Activated CD4-positive, alpha-beta T cell treated with anti-CD3 and anti-CD28 coated beads for 36 hours (primary cell): ENCODE measurements at regions of chr14 and their contacts with region 1.

Region 1: GRCh38 chr14:69611201-69612011 is at the start of gene SUSD6:
- DNase-seq: peak; percentile 95
- ATAC-seq: peak; percentile 74
- H3K4me3 Mint-ChIP-seq: peak within 1 kb of the TSS; percentile 87
- H3K27ac Mint-ChIP-seq: peak within 1 kb of the TSS; percentile 99
- H3K4me1 Mint-ChIP-seq: peaks cover 48% of the 10 kb centered on the region
- H3K27me3 Mint-ChIP-seq: no peaks in the 10 kb centered on the region
- total RNA-seq, gene SUSD6: 57.9 to 59.3 TPM

Region 2: DNA sequence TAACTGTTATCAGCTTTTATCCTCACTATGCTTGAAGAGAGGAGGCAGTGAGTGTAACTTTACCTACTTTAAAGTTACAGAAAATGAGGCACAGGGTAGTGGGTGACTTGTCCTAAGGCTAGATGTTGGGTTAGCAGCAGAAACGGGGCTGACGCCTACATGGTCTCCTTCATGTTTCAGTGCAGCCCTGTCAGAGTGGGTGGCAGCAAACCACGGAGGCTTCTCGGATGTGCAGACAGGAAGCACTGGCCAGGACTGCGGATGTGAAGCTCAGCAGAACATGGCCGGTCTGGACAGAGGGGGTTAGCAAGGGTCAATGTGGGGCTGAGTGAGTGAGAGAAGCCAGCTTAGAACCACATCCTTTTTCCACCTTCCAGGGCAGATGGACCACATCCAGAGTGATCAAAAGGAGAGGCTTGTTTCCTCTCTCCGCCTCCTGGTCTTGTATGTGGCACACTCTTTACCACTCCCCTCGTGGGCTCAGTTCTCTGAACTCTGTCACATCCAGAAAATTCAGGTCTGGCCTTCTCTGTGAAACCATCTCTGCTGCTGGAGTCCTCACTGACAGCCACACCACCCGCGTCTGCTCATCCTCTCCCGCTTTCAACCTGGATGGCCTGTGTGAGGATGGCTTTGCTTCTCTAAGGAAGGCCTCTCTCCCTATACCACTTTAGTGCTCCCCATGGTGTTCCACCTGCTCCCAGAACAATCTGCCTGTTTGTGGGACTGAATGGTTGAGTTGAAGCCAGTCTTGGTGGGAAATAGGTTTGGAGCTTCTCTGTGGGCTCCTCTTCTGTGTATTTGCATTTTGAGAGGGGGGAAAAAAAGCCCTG is 14.1 kb after region 1 on chr14:
- CTCF ChIA-PET with region 1: interaction called, 6 read pairs
- POLR2A ChIA-PET with region 1: interaction called, 4 read pairs
- intact Hi-C with region 1: loop called in 1 of 2 experiments (anchors 1 kb)
- DNase-seq: peak; percentile 89
- ATAC-seq: peak; percentile 81
- H3K4me3 Mint-ChIP-seq: peak overlapping the region; percentile 66
- H3K27ac Mint-ChIP-seq: peak overlapping the region; percentile 96
- H3K4me1 Mint-ChIP-seq: peaks cover 96% of the 10 kb centered on the region
- H3K27me3 Mint-ChIP-seq: no peaks in the 10 kb centered on the region

Region 3: DNA sequence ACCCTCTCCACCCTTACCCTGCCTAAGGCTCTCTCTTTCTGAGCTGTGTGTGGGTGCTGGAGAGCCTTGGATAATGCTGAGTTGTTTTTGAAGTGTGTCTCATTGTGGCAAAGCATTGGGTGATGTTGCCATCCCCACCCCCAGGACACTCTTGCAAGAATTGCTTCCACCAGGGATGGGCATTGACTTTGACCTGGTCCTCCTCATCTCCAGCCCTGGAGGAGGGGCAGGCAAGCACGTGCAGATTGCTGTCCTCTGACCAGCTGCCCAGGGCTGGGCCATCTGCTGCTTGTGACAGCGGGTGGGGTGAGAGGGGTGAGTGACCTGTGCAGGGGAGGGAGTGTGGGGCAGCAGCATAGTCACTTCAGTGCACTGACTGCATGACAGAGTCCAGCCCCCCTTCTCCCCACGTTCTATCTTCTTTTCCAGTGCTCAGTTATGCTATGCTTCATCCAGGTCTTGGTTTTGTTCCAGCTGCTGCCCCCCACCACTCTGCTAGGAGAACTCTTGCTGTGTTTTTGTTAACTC is 26.2 kb after region 1 on chr14:
- CTCF ChIA-PET with region 1: interaction called, 5 read pairs
- POLR2A ChIA-PET with region 1: interaction called, 5 read pairs
- intact Hi-C with region 1: loop called (anchors 1 to 2 kb)
- DNase-seq: peak; percentile 44
- ATAC-seq: peak; percentile 27
- H3K4me3 Mint-ChIP-seq: peak overlapping the region; percentile 52
- H3K27ac Mint-ChIP-seq: peak overlapping the region; percentile 87
- H3K4me1 Mint-ChIP-seq: peaks cover 92% of the 10 kb centered on the region
- H3K27me3 Mint-ChIP-seq: no peaks in the 10 kb centered on the region

Region 4: GRCh38 chr14:69685716-69686115 is 74.3 kb after region 1 on chr14:
- CTCF ChIA-PET with region 1: interaction called, 3 read pairs
- POLR2A ChIA-PET with region 1: interaction called, 4 read pairs
- intact Hi-C with region 1: loop called (anchors 1 to 2 kb)
- DNase-seq: peak; percentile 78
- ATAC-seq: peak; percentile 74
- H3K4me3 Mint-ChIP-seq: peak overlapping the region; percentile 49
- H3K27ac Mint-ChIP-seq: peak overlapping the region; percentile 94
- H3K4me1 Mint-ChIP-seq: peaks cover 81% of the 10 kb centered on the region
- H3K27me3 Mint-ChIP-seq: no peaks in the 10 kb centered on the region

Region 5: DNA sequence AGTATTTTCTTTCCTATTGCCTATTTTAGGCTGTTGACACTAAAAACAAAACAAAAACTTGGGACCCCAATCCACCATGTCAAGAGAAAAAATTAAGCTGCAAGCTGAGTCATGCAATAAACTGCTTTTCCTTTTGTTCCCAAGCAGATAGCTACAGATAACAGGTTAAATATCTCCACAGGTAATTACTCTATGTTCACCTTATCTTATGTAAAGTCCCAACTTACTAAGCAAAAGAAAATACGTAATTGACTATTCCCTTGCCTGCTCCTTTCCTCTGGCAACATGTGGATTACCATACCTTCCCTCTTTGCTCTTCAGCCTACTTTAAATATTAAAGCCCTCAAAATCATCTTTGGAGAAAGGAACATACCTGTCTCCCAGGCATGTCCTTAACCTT is 767.3 kb after region 1 on chr14:
- CTCF ChIA-PET with region 1: no interaction called
- POLR2A ChIA-PET with region 1: no interaction called
- intact Hi-C with region 1: no loop called
- DNase-seq: no peak
- ATAC-seq: no peak
- H3K4me3 Mint-ChIP-seq: no peak overlapping the region
- H3K27ac Mint-ChIP-seq: no peak overlapping the region
- H3K4me1 Mint-ChIP-seq: no peaks in the 10 kb centered on the region
- H3K27me3 Mint-ChIP-seq: no peaks in the 10 kb centered on the region

Region 6: DNA sequence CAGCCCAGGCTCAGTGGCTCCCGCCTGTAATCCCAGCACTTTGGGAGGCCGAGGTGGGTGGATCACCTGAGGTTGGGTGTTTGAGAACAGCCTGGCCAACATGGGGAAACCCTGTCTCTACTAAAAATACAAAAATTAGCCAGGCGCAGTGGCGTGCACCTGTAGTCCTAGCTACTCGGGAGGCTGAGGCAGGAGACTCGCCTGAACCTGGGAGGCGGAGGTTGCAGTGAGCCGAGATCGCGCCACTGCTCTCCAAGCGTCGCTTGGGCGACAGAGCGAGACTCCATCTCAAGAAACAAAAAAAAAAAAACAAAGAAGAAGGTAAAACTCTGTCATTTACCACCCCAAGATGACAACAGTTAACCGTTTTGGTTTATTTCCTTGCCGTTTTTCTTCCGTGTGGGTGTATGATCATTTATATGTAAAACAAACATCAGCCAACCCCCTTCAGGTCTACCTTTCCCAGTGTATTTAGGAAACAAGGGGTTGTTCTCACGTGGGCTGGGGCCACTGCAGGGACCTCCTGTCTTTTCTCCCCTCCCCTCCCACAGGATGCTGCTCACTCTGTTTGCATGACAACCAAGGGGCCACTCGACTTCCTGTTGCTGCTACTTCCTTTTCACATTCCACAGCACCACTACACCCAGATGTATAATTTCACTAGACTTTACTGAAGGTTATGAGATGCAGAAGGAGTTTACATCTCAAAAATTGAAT is 1043.9 kb after region 1 on chr14:
- CTCF ChIA-PET with region 1: no interaction called
- POLR2A ChIA-PET with region 1: no interaction called
- intact Hi-C with region 1: loop called in 1 of 2 experiments (anchors 5 kb)
- DNase-seq: peak; percentile 82
- ATAC-seq: peak; percentile 80
- H3K4me3 Mint-ChIP-seq: peak overlapping the region; percentile 76
- H3K27ac Mint-ChIP-seq: peak overlapping the region; percentile 99
- H3K4me1 Mint-ChIP-seq: peaks cover 90% of the 10 kb centered on the region
- H3K27me3 Mint-ChIP-seq: no peaks in the 10 kb centered on the region